Vagina (tissue), 2 donors: ENCODE measurements at regions of chr3 and their contacts with region 1.

Region 1: GRCh38 chr3:98525494-98525893 is 2.8 kb upstream of the CLDND1 start:
- DNase-seq: no peak
- H3K4me3 ChIP-seq: no peak overlapping the region
- H3K27ac ChIP-seq: no peak overlapping the region
- H3K4me1 ChIP-seq: peaks cover 14% of the 10 kb centered on the region
- H3K27me3 ChIP-seq: no peaks in the 10 kb centered on the region
- CTCF ChIP-seq: no peak
- POLR2A ChIP-seq: no peak

Region 2: DNA sequence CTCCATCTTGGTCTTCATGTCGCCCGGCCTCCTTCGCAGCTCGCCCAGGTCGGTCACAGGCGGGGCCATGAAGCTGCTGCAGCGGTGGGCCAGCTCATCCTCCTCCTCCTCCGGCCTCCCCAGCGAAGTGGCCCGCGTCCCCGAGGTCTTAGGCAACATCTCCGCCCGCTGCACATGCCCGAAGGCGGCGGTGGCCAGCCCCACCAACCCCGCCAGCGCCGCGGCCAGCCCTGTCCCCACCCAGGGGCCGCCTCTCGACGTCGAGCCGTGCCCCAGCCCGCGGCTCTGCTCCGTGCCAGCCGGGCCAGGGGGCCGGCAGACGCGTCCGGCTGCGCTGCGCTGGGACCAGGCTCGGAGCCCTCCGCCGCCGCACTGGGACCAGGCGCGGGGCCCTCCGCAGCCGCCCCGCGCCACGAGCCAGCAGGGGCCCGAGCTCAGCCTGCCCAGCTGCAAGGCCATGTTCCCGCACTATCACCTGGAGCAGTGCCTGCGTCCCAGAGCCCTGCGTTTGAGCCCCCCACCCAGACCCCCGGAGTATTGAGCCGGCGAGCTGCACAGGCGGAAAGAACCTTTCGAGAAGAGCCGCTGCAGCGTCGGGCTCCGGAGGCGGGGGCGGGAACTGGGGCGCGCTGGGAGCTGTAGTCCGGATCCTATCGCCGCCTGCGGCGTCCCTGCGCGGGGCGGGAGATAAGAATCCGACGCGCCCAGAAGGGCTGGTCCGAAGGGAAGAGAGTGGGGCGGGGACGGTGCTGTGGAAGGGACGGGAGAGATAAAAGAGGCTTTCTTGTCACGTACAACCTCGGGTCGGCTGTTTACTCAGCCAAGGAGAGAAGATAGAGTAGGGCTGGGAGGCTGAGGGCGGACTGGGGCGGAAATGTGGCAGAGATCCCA is 67.8 kb after region 1 on chr3 and contains the start of gene CPOX:
- intact Hi-C with region 1: loop called (anchors 5 kb)
- DNase-seq: no peak
- H3K4me3 ChIP-seq: peak within 1 kb of the TSS; percentile 71 to 83
- H3K27ac ChIP-seq: peak within 1 kb of the TSS; percentile 88
- H3K4me1 ChIP-seq: peaks cover 25% of the 10 kb centered on the region
- H3K27me3 ChIP-seq: no peaks in the 10 kb centered on the region
- CTCF ChIP-seq: no peak
- POLR2A ChIP-seq: peak in 1 of 2 donors; percentile 17
- total RNA-seq, gene CPOX: 21.4 TPM

Region 3: DNA sequence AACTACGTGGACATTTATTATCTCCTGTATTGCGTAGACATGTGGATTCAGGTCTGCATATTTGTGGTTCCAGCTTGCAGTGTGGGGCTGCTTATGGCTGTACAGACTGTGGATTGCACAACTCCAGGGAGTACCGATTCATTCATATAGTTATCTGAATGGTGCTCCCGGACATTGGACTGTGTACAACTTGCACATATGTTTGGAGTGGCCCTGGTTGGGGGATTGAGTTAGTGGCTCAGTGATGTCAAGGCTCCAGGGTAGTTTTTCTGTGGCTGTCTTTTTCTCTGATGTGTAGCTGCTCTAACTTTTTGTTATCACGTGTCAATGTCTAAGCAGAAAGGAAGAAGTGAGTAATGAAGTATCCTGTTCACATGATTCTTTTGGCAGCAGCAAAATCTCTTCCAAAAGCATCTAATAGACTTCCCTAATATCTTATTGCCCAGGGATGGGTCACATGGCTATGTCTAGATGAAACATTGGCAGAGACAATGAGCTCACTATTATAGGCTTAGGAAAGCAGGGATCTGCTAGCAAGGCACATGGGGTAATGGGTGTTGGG is 253.4 kb after region 1 on chr3:
- intact Hi-C with region 1: no loop called
- DNase-seq: no peak
- H3K4me3 ChIP-seq: no peak overlapping the region
- H3K27ac ChIP-seq: peak overlapping the region; percentile 37
- H3K4me1 ChIP-seq: peaks cover 18% of the 10 kb centered on the region
- H3K27me3 ChIP-seq: no peaks in the 10 kb centered on the region
- CTCF ChIP-seq: no peak
- POLR2A ChIP-seq: no peak